ENCODE measurements at regions of chr12 and their contacts with region 1.

Region 1: DNA sequence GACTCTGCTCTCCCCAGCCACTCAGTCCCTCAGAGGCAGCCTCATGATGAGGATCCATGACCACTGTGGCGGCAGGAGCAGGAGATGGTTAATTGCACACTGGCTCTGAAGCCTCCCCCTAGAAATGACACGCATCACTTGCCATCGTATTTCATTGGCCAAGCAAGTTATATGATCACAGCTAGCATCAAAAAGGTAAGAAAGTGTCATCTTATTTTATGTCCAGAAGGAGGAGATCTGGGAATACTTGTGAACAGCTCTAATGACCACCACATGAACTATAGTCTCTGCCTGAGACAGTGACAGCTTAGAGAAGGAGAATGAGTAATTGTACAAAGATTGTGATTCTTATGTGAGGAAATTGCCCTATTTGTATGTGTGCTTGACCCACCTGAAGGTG is 363.4 kb downstream of the NUAK1 start:
- DNase-seq: no peak
- ATAC-seq: no peak
- H3K4me3 ChIP-seq: no peak overlapping the region
- H3K27ac ChIP-seq: no peak overlapping the region
- H3K4me1 ChIP-seq: no peaks in the 10 kb centered on the region
- H3K27me3 ChIP-seq: no peaks in the 10 kb centered on the region
- CTCF ChIP-seq: no peak

Region 2: DNA sequence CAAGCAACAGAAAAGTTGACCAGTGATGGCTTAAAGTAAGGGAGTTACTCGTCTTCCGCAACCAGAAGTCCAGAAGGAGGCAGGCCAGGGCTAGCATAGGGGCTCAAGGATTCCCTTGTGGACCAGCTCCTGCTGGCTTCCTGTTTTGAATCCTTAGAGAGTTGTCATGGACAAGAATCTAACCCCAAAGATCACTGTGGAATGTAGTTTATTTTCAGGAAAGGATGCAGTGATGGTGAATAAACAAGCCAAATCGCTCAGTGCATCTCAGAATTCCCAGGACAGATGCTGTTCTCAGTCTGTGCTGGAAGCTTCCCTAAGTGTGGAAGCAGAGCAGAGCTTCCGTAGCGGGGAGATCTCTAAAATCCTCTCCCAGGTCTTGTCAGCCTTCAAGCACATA is 133.6 kb before region 1 on chr12:
- CTCF ChIA-PET with region 1: no interaction called
- POLR2A ChIA-PET with region 1: no interaction called
- in situ Hi-C with region 1: no loop called
- intact Hi-C with region 1: no loop called
- DNase-seq: no peak
- ATAC-seq: no peak
- H3K4me3 ChIP-seq: no peak overlapping the region
- H3K27ac ChIP-seq: no peak overlapping the region
- H3K4me1 ChIP-seq: no peaks in the 10 kb centered on the region
- H3K27me3 ChIP-seq: no peaks in the 10 kb centered on the region
- CTCF ChIP-seq: no peak

Region 3: GRCh38 chr12:106084014-106084671 is 308.8 kb after region 1 on chr12:
- CTCF ChIA-PET with region 1: interaction called, 12 read pairs
- POLR2A ChIA-PET with region 1: no interaction called
- in situ Hi-C with region 1: no loop called
- intact Hi-C with region 1: no loop called
- DNase-seq: no peak
- ATAC-seq: peak; percentile 90
- H3K4me3 ChIP-seq: no peak overlapping the region
- H3K27ac ChIP-seq: peak overlapping the region; percentile 88
- H3K4me1 ChIP-seq: peaks cover 47% of the 10 kb centered on the region
- H3K27me3 ChIP-seq: no peaks in the 10 kb centered on the region
- CTCF ChIP-seq: no peak

Measured in Panc1 (cell line).